Calu3 (cell line): ENCODE measurements at regions of chr2 and their contacts with region 1.

Region 1: DNA sequence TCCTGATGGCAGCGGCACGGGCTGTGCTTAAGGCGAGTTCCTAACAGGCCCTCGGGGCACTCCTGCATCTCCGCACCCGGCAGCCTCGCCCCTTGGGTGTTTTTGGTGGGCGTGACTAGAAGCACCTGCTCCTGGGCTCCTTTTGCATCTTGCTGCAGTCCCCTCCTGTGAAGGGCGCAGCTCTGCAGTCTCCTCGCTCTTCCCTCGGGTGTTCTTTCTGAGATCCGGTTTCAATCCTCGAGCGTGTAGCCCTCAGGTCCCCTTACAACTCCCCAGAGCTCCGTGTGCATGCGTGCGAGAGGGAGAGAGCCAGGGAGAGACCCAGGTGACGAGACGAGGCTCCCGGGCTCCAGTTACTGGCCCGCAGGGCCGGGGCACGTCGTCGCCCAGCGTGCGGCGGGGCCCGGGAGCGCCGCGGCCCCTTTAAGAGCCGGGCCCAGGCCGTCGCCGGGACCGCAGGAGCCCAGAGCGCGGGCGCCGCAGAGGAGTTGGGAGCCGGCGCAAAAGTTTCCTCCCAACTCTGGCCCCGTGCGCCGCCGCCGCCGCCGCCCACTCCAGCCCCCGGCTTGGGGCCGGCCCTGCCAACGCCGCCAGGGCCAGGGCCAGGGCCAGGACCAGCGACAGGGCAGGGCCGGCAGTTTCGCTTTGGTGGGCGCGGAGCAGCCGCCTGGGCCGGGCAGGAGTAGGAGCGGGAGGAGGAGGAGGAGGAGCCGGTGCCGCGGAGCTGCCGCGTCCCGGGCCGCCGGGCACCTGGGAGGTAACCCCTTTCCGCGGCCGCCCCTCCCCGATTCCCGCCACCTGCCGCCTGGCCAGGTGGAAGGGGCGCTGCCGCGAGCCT is at the start of gene PARD3B:
- DNase-seq: peak; percentile 72
- H3K4me3 Mint-ChIP-seq: peak within 1 kb of the TSS; percentile 97
- H3K27ac Mint-ChIP-seq: peak within 1 kb of the TSS; percentile 85
- H3K4me1 Mint-ChIP-seq: no peaks in the 10 kb centered on the region
- H3K27me3 Mint-ChIP-seq: no peaks in the 10 kb centered on the region
- CTCF ChIP-seq: no peak
- total RNA-seq, gene PARD3B: 10.1 and 12.1 TPM in 2 replicates

Region 2: DNA sequence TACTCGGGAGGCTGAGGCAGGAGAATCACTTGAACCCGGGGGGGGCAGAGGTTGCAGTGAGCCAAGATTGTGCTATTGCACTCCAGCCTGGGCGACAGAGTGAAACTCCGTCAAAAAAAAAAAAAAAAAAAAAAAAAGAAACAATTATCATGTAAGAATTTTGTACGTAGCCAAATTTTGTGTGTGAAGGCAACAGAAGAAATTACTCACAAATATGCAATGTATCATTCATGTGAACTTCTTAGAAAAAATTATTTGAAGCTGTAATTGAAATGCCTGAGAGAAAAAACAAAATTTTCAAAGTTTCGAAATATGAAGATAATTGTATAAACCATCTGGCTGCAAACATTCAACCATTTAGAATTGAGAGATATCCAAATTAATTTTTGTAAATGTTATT is 204.7 kb before region 1 on chr2:
- CTCF ChIA-PET with region 1: no interaction called
- intact Hi-C with region 1: loop called (anchors 5 kb)
- DNase-seq: no peak
- H3K4me3 Mint-ChIP-seq: no peak overlapping the region
- H3K27ac Mint-ChIP-seq: no peak overlapping the region
- H3K4me1 Mint-ChIP-seq: peaks cover 57% of the 10 kb centered on the region
- H3K27me3 Mint-ChIP-seq: no peaks in the 10 kb centered on the region
- CTCF ChIP-seq: no peak

Region 3: DNA sequence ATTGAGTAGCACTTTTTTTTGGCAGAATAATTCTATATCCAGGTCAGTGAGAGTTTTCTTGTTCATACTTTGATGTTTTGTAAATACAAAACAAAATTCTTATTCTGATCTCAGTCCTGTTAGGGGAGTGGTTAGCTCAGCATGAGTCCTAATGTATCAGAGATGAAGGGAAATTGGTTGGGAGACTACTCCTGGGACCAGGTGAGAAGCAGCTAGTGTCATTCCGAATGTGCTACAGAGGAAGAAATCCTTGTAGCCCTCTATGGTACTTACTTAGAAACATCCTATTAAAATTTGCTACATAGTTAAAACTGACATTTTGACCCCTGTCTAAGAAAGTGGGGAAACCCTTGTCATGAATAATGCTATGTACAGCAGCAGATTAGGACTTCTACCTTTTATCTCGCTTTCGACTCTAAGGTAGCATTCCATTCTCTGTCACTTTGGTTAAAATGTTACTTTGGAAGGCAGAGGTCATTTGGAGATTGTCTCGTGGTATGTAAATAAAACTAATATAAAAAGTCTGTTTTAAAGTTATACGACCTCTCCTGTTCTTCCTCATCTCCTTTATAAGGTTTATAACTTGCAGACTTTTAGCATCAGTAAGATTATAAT is 65.9 kb after region 1 on chr2:
- CTCF ChIA-PET with region 1: no interaction called
- intact Hi-C with region 1: loop called (anchors 5 kb)
- DNase-seq: no peak
- H3K4me3 Mint-ChIP-seq: no peak overlapping the region
- H3K27ac Mint-ChIP-seq: no peak overlapping the region
- H3K4me1 Mint-ChIP-seq: peaks cover 33% of the 10 kb centered on the region
- H3K27me3 Mint-ChIP-seq: no peaks in the 10 kb centered on the region
- CTCF ChIP-seq: no peak

Region 4: DNA sequence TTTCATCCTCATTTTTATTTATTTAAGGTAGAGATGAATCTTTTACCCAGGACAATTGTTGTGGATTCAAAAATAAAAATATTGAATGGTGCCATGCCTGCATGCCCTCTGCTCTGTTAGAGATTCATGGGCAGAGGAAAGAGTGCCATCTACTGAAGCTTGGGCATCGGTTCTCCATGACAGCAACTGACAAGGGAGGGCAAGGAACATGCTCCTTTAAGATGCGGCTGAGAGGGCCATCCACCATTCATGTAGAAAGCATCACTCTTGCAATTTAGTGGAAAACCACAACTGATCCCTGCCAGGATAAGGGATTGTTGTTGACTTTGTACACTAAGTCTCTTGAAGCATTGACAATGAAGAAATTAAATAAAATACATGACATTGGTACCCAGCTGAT is 79.9 kb after region 1 on chr2:
- CTCF ChIA-PET with region 1: no interaction called
- intact Hi-C with region 1: no loop called
- DNase-seq: peak; percentile 24
- H3K4me3 Mint-ChIP-seq: no peak overlapping the region
- H3K27ac Mint-ChIP-seq: no peak overlapping the region
- H3K4me1 Mint-ChIP-seq: no peaks in the 10 kb centered on the region
- H3K27me3 Mint-ChIP-seq: no peaks in the 10 kb centered on the region
- CTCF ChIP-seq: peak; percentile 19

Region 5: DNA sequence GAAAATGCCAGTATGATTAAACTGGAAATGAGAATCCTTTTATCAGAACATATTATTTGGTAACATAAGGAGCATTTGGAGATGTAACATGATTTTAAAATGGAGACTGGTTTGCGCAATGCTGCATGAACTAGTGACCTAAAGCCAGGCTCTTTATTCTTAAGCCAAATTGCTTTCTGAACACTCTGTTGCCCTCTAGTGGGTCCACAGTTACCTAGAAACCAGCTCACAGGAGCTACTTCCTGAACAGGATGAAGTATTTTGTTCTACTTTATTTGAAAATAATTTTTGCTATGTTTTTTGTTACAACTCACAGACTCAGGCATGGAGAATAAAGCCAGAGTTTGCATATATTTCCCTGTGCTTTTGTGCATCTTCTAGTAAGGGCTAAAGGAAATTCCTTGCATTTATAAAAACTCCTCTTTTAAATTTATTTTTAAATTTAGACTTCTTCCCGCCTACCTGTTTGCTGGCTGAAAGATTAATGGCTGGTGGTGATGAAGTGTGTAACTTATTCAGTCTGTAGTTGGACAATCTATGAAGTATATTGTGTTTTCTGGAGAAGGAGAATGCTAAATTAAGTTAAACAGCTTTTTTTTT is 146.8 kb after region 1 on chr2:
- CTCF ChIA-PET with region 1: no interaction called
- intact Hi-C with region 1: loop called (anchors 5 kb)
- DNase-seq: peak; percentile 63
- H3K4me3 Mint-ChIP-seq: no peak overlapping the region
- H3K27ac Mint-ChIP-seq: no peak overlapping the region
- H3K4me1 Mint-ChIP-seq: peaks cover 8% of the 10 kb centered on the region
- H3K27me3 Mint-ChIP-seq: no peaks in the 10 kb centered on the region
- CTCF ChIP-seq: peak; percentile 57

Region 6: DNA sequence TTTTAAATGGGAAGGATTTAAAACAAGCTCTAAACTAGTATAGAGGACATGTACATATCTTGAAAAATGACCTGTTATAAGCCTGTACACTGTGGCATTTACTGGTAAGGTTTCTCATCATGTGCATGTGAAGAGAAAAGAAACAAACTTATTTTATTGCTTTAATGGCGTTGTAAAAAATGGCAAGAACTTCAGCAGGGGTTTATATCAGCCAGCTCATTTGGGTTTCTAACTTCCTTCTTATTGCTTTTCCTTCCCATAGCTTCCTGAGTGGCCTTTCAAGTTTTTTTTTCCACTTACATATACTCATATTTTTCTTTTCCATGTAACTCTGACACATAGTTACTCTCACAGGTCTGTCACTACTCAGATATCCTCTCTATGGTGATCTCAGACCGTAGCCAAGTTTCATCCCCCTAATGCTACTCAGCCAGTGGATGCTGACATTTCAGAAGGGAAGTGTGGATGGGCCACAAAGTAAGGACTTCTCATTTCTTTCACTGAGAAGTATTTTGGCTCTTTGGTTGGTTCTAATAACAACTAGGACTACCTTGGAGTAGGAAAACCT is 198.2 kb after region 1 on chr2:
- CTCF ChIA-PET with region 1: no interaction called
- intact Hi-C with region 1: no loop called
- DNase-seq: no peak
- H3K4me3 Mint-ChIP-seq: no peak overlapping the region
- H3K27ac Mint-ChIP-seq: no peak overlapping the region
- H3K4me1 Mint-ChIP-seq: no peaks in the 10 kb centered on the region
- H3K27me3 Mint-ChIP-seq: no peaks in the 10 kb centered on the region
- CTCF ChIP-seq: no peak